ENCODE measurements at regions of chr7 and their contacts with region 1.

Region 1: GRCh38 chr7:105759670-105760550 is 116.5 kb downstream of the ATXN7L1 start:
- DNase-seq: peak in 1 of 2 donors; percentile 69
- ATAC-seq: peak; percentile 57

Region 2: DNA sequence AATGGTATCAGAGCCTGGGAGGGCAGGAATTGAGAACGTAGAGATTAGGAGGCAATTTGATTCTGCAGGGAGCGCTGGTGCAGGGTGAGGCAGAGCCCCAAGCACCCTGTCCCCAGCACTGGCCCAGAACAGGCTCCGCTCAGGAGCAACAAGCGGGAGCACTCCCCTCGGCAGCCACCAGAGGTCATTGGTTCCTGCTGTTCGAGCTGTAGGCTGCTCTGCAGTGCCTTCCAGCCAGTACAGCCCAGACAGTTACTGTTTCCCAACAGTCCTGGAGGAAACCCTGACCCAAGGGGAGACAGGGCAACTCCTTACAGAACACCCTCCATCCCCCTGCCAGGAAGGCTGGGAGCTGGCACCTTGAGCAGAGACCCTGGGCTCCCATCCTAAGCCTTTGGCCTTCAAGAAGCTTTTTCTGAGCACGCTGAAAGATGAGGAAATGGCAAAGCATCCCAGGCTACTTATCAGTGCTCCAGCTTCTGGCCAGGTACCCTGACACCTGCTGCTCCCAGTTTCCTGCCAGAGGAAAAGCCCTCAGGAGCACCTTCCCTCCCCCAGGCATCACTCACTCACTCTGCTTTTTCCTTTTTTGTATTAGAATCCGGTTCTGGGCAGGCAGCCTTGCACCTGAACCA is 107.4 kb before region 1 on chr7:
- intact Hi-C with region 1: loop called in 1 of 2 experiments (anchors 10 kb)
- DNase-seq: peak; percentile 65 to 85
- ATAC-seq: peak; percentile 86

Region 3: GRCh38 chr7:105876091-105876963 is 116.4 kb after region 1 on chr7 and contains the start of gene ATXN7L1:
- intact Hi-C with region 1: no loop called
- DNase-seq: peak; percentile 94 to 97
- ATAC-seq: peak; percentile 85
- total RNA-seq, gene ATXN7L1: 19.6 to 22.1 TPM

Region 4: DNA sequence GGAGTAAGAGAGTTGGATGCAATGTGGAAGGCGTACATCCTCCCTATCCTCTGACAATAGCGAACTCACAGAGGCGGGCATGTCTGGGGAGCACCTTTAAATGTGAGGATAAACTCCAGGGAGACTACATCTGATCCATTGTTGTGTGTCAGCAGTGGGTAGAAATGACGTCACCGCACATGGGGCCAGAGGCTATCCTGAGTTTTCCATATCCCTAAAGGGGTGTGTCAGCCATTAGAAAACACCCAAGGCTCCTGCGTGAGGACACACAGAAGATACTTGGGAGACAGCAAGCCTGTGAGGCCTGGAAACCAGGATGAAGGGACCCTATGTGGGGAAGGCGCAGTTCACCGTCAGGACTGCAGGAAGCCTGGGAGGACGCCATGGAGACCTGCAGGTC is 185.9 kb after region 1 on chr7:
- intact Hi-C with region 1: no loop called
- DNase-seq: no peak
- ATAC-seq: no peak

Measured in left colon (tissue), 2 donors.